ENCODE measurements at regions of chr1 and their contacts with region 1.

Region 1: GRCh38 chr1:67500413-67500959 is 70.3 kb upstream of the SERBP1 start:
- DNase-seq: peak; percentile 66 to 73 (median 69)
- H3K4me3 ChIP-seq: no peak overlapping the region
- H3K4me3 Mint-ChIP-seq: no peak overlapping the region
- H3K27ac ChIP-seq: no peak overlapping the region
- H3K27ac Mint-ChIP-seq: no peak overlapping the region
- H3K4me1 ChIP-seq: no peaks in the 10 kb centered on the region
- H3K4me1 Mint-ChIP-seq: peaks cover 6% of the 10 kb centered on the region
- H3K27me3 ChIP-seq: no peaks in the 10 kb centered on the region
- H3K27me3 Mint-ChIP-seq: peaks cover 0 to 2% (median 1%) of the 10 kb centered on the region in 3 donors
- CTCF ChIP-seq: peak; percentile 97

Region 2: GRCh38 chr1:67053785-67054772 is 446.4 kb before region 1 on chr1 and contains the start of gene SLC35D1:
- intact Hi-C with region 1: no loop called
- DNase-seq: peak; percentile 38 to 58 (median 51)
- H3K4me3 ChIP-seq: peak within 1 kb of the TSS; percentile 66 to 81 (median 72)
- H3K4me3 Mint-ChIP-seq: peak within 1 kb of the TSS; percentile 92 to 96
- H3K27ac ChIP-seq: peak within 1 kb of the TSS; percentile 64 to 80
- H3K27ac Mint-ChIP-seq: peak within 1 kb of the TSS; percentile 76 to 94 (median 92)
- H3K4me1 ChIP-seq: peaks cover 12 to 21% of the 10 kb centered on the region in 2 donors
- H3K4me1 Mint-ChIP-seq: peaks cover 24% of the 10 kb centered on the region
- H3K27me3 ChIP-seq: no peaks in the 10 kb centered on the region
- H3K27me3 Mint-ChIP-seq: peaks cover 2% of the 10 kb centered on the region in 3 donors
- CTCF ChIP-seq: no peak
- polyA plus RNA-seq, gene SLC35D1: 2.2 to 3.3 (median 2.7) TPM

Region 3: DNA sequence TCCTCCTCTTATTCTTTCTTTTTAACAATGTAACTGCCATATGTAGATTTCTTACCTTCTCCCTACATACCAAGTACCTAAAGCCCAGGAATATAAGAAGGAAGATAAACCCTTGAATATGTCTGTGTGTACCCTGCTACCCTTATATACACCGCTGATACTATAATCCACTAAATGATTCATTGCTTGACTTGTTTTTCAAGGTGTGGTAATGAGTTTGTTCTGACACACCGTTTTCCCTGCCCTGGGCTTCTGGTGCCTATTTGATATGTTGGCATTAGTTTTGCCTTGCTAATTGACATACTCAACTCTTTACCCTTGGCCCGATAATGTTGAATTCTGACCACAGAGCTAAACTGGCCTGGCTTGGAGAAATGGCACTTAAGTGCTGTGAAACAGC is 269.9 kb before region 1 on chr1:
- intact Hi-C with region 1: loop called (anchors 5 kb)
- DNase-seq: no peak
- H3K4me3 ChIP-seq: no peak overlapping the region
- H3K4me3 Mint-ChIP-seq: no peak overlapping the region
- H3K27ac ChIP-seq: no peak overlapping the region
- H3K27ac Mint-ChIP-seq: no peak overlapping the region
- H3K4me1 ChIP-seq: no peaks in the 10 kb centered on the region
- H3K4me1 Mint-ChIP-seq: no peaks in the 10 kb centered on the region
- H3K27me3 ChIP-seq: no peaks in the 10 kb centered on the region
- H3K27me3 Mint-ChIP-seq: no peaks in the 10 kb centered on the region
- CTCF ChIP-seq: no peak

Region 4: DNA sequence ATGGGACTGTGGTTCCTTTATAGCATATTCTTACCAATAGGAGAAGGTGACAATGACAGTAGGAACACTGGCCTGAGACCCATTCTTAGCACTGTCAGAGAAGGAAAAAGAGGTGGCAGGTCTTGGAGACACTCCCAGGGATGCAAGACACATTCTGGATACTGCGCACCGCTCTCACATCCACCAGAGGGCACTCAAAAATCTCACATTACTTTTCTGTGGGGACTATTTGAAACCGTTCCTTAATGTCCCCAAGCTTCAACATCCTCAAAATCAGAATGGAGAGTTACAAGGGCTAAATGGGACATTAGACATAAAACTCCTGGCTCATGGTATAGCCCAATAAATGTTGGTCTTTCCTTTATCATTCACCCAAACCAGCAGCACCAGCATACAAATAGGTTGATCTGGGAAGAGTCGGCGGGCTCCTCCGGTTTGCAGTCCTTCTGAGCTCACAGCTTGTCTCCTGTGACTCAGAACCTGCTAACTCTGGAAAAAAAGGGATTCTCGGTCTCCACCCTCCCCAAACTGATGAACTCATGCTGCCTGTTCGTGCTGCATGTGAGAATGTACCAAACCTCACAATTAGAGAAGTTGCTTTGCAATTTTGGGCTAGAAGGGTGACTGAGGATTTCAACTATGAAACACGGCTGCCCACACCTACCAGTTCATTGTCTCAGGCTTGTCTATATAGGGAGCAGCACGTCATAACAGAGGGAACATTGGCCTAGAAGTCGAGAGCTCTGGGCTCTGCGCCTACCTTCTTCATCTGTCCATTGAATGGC is 152.6 kb before region 1 on chr1:
- intact Hi-C with region 1: loop called (anchors 10 kb)
- DNase-seq: no peak
- H3K4me3 ChIP-seq: no peak overlapping the region
- H3K4me3 Mint-ChIP-seq: no peak overlapping the region
- H3K27ac ChIP-seq: no peak overlapping the region
- H3K27ac Mint-ChIP-seq: no peak overlapping the region
- H3K4me1 ChIP-seq: no peaks in the 10 kb centered on the region
- H3K4me1 Mint-ChIP-seq: no peaks in the 10 kb centered on the region
- H3K27me3 ChIP-seq: no peaks in the 10 kb centered on the region
- H3K27me3 Mint-ChIP-seq: no peaks in the 10 kb centered on the region
- CTCF ChIP-seq: peak; percentile 51

Region 5: GRCh38 chr1:67771152-67771551 is 270.7 kb after region 1 on chr1:
- intact Hi-C with region 1: no loop called
- DNase-seq: no peak
- H3K4me3 ChIP-seq: no peak overlapping the region
- H3K4me3 Mint-ChIP-seq: no peak overlapping the region
- H3K27ac ChIP-seq: no peak overlapping the region
- H3K27ac Mint-ChIP-seq: no peak overlapping the region
- H3K4me1 ChIP-seq: peaks cover 5 to 6% of the 10 kb centered on the region in 2 donors
- H3K4me1 Mint-ChIP-seq: peaks cover 6% of the 10 kb centered on the region
- H3K27me3 ChIP-seq: no peaks in the 10 kb centered on the region
- H3K27me3 Mint-ChIP-seq: peaks cover 3 to 16% (median 12%) of the 10 kb centered on the region in 3 donors
- CTCF ChIP-seq: no peak

Measured in CD14-positive monocyte (primary cell).